Sciatic nerve (tissue), 2 donors: ENCODE measurements at regions of chr13 and their contacts with region 1.

Region 1: GRCh38 chr13:92494915-92495314 is 731.7 kb upstream of the GPC6 start:
- DNase-seq: no peak
- ATAC-seq: no peak

Region 2: GRCh38 chr13:91520952-91521351 is 974.0 kb before region 1 on chr13:
- intact Hi-C with region 1: no loop called
- DNase-seq: no peak
- ATAC-seq: no peak

Region 3: GRCh38 chr13:92514420-92515125 is 19.7 kb after region 1 on chr13:
- intact Hi-C with region 1: no loop called
- DNase-seq: no peak
- ATAC-seq: no peak

Region 4: GRCh38 chr13:92716749-92717148 is 221.8 kb after region 1 on chr13:
- intact Hi-C with region 1: no loop called
- DNase-seq: no peak
- ATAC-seq: peak; percentile 62

Region 5: GRCh38 chr13:94427313-94427953 is 1932.5 kb after region 1 on chr13:
- intact Hi-C with region 1: loop called (anchors 5 kb)
- DNase-seq: no peak
- ATAC-seq: no peak